ENCODE measurements at regions of chr16 and their contacts with region 1.

Region 1: GRCh38 chr16:77675464-77676324 is 46.6 kb upstream of the NUDT7 start:
- DNase-seq: peak; percentile 78
- H3K4me3 ChIP-seq: no peak overlapping the region
- H3K27ac ChIP-seq: no peak overlapping the region
- H3K4me1 ChIP-seq: no peaks in the 10 kb centered on the region
- H3K27me3 ChIP-seq: no peaks in the 10 kb centered on the region
- CTCF ChIP-seq: peak; percentile 72 to 97 (median 89)
- EP300 ChIP-seq: no peak
- POLR2A ChIP-seq: no peak

Region 2: GRCh38 chr16:77869997-77870813 is 194.5 kb after region 1 on chr16:
- intact Hi-C with region 1: no loop called
- DNase-seq: no peak
- H3K4me3 ChIP-seq: no peak overlapping the region
- H3K27ac ChIP-seq: no peak overlapping the region
- H3K4me1 ChIP-seq: no peaks in the 10 kb centered on the region
- H3K27me3 ChIP-seq: no peaks in the 10 kb centered on the region
- CTCF ChIP-seq: no peak
- EP300 ChIP-seq: no peak
- POLR2A ChIP-seq: no peak

Region 3: GRCh38 chr16:77971306-77972271 is 295.9 kb after region 1 on chr16:
- intact Hi-C with region 1: loop called (anchors 1 kb)
- DNase-seq: peak; percentile 83
- H3K4me3 ChIP-seq: no peak overlapping the region
- H3K27ac ChIP-seq: no peak overlapping the region
- H3K4me1 ChIP-seq: no peaks in the 10 kb centered on the region
- H3K27me3 ChIP-seq: no peaks in the 10 kb centered on the region
- CTCF ChIP-seq: peak; percentile 66 to 73 (median 70)
- EP300 ChIP-seq: no peak
- POLR2A ChIP-seq: no peak

Region 4: GRCh38 chr16:78002915-78003538 is 327.3 kb after region 1 on chr16:
- intact Hi-C with region 1: loop called (anchors 2 kb)
- DNase-seq: peak; percentile 93
- H3K4me3 ChIP-seq: no peak overlapping the region
- H3K27ac ChIP-seq: no peak overlapping the region
- H3K4me1 ChIP-seq: peaks cover 0 to 8% (median 2%) of the 10 kb centered on the region in 4 donors
- H3K27me3 ChIP-seq: no peaks in the 10 kb centered on the region
- CTCF ChIP-seq: peak; percentile 62 to 84 (median 72)
- EP300 ChIP-seq: no peak
- POLR2A ChIP-seq: no peak

Region 5: DNA sequence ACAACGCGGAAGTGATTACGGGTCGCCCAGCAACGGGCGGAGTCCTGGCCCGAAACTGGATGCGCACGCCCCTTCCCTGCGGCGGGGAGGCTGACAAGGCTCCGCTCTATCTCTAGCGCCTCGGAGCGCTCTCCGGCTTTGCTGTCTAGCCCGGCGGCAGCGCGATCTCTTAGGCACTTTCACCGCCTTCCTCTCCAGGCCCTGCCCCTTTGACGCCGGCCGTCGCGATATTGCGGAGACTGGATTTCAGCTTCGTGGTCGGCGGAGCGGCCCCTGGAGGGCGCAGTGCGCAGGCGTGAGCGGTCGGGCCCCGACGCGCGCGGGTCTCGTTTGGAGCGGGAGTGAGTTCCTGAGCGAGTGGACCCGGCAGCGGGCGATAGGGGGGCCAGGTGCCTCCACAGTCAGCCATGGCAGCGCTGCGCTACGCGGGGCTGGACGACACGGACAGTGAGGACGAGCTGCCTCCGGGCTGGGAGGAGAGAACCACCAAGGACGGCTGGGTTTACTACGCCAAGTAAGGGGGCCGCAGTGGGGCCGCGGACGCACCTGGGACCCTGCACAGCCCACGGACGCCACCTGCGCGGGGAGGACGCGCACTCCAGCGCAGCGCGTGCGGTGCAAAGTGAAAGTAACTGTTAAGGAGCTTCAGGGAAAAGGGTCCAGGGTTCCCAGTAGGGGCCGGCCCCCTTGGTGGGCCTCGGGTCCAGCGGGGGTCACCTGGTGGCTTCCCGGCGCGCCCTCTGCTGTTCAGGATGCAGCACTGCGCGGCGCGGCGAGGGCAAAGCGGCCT is 423.9 kb after region 1 on chr16 and contains the start of gene WWOX:
- intact Hi-C with region 1: loop called (anchors 10 kb)
- DNase-seq: peak; percentile 98
- H3K4me3 ChIP-seq: peak within 1 kb of the TSS; percentile 70 to 96 (median 90)
- H3K27ac ChIP-seq: peak within 1 kb of the TSS; percentile 85 to 94 (median 91)
- H3K4me1 ChIP-seq: peaks cover 0 to 14% (median 7%) of the 10 kb centered on the region in 4 donors
- H3K27me3 ChIP-seq: no peaks in the 10 kb centered on the region
- CTCF ChIP-seq: peak in 3 of 4 experiments; percentile 51 to 85 (median 62)
- EP300 ChIP-seq: no peak
- POLR2A ChIP-seq: no peak
- total RNA-seq, gene WWOX: 16.1 to 46.8 (median 36.5) TPM

Measured in sigmoid colon (tissue), 7 donors.